ENCODE measurements at regions of chr6 and their contacts with region 1.

Region 1: GRCh38 chr6:19415585-19416326 is 421.4 kb upstream of the ID4 start:
- DNase-seq: peak; percentile 47
- H3K4me3 Mint-ChIP-seq: no peak overlapping the region
- H3K27ac Mint-ChIP-seq: peak overlapping the region; percentile 67
- H3K4me1 Mint-ChIP-seq: peaks cover 11% of the 10 kb centered on the region
- H3K27me3 Mint-ChIP-seq: no peaks in the 10 kb centered on the region
- CTCF ChIP-seq: no peak

Region 2: GRCh38 chr6:19024737-19025136 is 391.0 kb before region 1 on chr6:
- CTCF ChIA-PET with region 1: no interaction called
- POLR2A ChIA-PET with region 1: no interaction called
- intact Hi-C with region 1: no loop called
- DNase-seq: peak; percentile 66
- H3K4me3 Mint-ChIP-seq: no peak overlapping the region
- H3K27ac Mint-ChIP-seq: no peak overlapping the region
- H3K4me1 Mint-ChIP-seq: no peaks in the 10 kb centered on the region
- H3K27me3 Mint-ChIP-seq: no peaks in the 10 kb centered on the region
- CTCF ChIP-seq: peak; percentile 65

Region 3: GRCh38 chr6:19342616-19343015 is 73.1 kb before region 1 on chr6:
- CTCF ChIA-PET with region 1: no interaction called
- POLR2A ChIA-PET with region 1: no interaction called
- intact Hi-C with region 1: no loop called
- DNase-seq: no peak
- H3K4me3 Mint-ChIP-seq: no peak overlapping the region
- H3K27ac Mint-ChIP-seq: no peak overlapping the region
- H3K4me1 Mint-ChIP-seq: no peaks in the 10 kb centered on the region
- H3K27me3 Mint-ChIP-seq: no peaks in the 10 kb centered on the region
- CTCF ChIP-seq: no peak

Region 4: DNA sequence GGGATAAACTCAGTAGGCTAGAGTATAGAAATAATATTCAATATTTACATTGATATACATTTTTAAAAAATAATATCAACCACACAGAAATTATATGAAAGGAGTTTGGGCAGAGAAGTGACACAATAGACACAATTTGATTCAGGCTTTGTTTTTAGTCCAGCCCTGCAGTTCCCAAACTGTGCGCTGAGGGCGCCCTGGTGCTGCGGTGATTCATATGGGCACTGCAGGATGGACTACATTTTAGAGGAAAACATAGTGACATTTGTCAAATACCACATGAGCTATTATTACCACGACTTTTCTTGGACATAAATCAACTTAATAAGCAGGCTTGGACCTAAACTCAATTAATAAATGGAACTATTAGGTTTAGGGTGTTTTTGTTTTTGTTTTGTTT is 57.1 kb after region 1 on chr6:
- CTCF ChIA-PET with region 1: interaction called, 3 read pairs
- POLR2A ChIA-PET with region 1: interaction called, 3 read pairs
- intact Hi-C with region 1: loop called (anchors 2 kb)
- DNase-seq: peak; percentile 40
- H3K4me3 Mint-ChIP-seq: no peak overlapping the region
- H3K27ac Mint-ChIP-seq: no peak overlapping the region
- H3K4me1 Mint-ChIP-seq: peaks cover 9% of the 10 kb centered on the region
- H3K27me3 Mint-ChIP-seq: peaks cover 10% of the 10 kb centered on the region
- CTCF ChIP-seq: peak; percentile 19

Region 5: DNA sequence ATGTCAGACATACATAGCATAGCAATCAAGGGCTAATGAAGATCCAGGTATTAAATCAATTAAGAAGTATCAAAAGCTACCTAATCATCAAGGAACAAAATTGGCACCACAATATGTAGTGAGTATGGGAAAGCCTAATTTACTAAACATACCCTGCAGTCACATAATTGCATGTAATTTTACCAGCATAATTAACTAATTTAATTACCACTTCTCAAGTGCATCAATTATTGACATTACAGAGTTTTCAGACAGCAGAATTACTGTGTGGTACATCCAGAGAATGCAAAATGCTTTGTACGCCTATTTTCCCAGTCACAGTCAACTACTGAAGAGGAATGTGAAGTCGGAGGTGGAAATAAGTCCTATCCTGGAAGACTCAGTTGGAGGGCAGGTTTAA is 142.4 kb after region 1 on chr6:
- CTCF ChIA-PET with region 1: no interaction called
- POLR2A ChIA-PET with region 1: no interaction called
- intact Hi-C with region 1: no loop called
- DNase-seq: no peak
- H3K4me3 Mint-ChIP-seq: no peak overlapping the region
- H3K27ac Mint-ChIP-seq: no peak overlapping the region
- H3K4me1 Mint-ChIP-seq: no peaks in the 10 kb centered on the region
- H3K27me3 Mint-ChIP-seq: no peaks in the 10 kb centered on the region
- CTCF ChIP-seq: no peak

Measured in MCF 10A (cell line).